A673 (cell line): ENCODE measurements at regions of chr7 and their contacts with region 1.

Region 1: DNA sequence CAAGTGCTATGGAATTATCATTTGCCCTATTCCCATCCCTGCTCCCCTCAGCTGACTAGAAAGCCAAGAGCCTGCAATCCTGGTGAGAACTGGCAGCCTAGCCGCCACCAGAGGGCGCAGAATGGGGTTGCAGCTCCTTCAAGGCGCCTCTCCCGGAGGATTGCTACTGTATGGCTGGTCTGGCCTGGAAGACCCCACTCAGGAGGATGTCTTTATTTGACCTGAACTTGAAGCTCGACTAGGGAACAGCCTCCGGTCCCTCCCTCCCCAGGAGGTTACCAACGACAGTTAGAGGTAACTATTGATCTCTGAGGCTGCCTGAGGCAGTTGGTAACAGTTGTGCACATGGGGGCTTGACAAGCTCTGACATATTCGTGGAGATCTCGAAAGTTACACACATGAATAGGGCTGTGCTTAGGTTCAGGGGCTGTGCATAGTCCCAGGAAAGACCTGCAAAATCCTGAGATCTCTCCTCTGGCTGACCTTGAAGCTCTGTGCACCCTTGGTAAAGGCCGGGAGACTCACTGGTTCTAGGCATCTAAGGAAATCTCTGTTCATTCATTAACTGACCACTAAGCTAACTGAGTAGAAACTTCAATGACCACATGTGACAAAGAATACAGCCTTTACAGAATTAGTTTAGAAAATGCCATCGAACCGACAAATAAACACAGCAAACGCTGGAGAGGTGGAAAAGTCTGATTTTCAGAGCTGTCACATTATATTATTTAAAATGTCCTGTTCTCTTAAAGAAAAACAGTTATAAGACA is 65.7 kb downstream of the TSPAN12 start:
- DNase-seq: peak; percentile 82
- H3K4me3 ChIP-seq: no peak overlapping the region
- H3K27ac ChIP-seq: no peak overlapping the region
- H3K4me1 ChIP-seq: no peaks in the 10 kb centered on the region
- H3K27me3 ChIP-seq: no peaks in the 10 kb centered on the region
- CTCF ChIP-seq: peak; percentile 97

Region 2: DNA sequence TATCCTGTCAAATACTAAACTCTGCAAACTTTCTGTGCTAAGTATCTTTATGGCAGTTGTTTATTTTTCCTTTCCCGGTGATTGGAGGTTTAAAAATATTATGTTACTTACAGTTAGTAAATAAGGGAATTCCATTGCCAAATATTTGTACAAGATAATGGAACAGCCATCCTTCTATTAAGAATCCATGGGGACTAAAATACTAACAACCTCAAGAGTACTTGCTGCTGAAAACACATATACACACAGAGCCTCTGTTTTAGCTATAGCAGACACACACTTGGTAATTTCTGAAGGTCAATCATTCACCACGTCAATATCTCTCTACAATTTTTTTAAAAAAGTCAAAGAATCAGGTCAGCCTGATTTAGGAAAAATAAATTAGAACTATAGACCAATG is 33.3 kb after region 1 on chr7:
- CTCF ChIA-PET with region 1: no interaction called
- POLR2A ChIA-PET with region 1: no interaction called
- intact Hi-C with region 1: no loop called
- DNase-seq: no peak
- H3K4me3 ChIP-seq: no peak overlapping the region
- H3K27ac ChIP-seq: no peak overlapping the region
- H3K4me1 ChIP-seq: no peaks in the 10 kb centered on the region
- H3K27me3 ChIP-seq: no peaks in the 10 kb centered on the region
- CTCF ChIP-seq: no peak

Region 3: GRCh38 chr7:120941064-120941463 is 148.8 kb after region 1 on chr7:
- CTCF ChIA-PET with region 1: interaction called, 3 read pairs
- POLR2A ChIA-PET with region 1: no interaction called
- intact Hi-C with region 1: loop called (anchors 5 kb)
- DNase-seq: peak; percentile 29
- H3K4me3 ChIP-seq: no peak overlapping the region
- H3K27ac ChIP-seq: no peak overlapping the region
- H3K4me1 ChIP-seq: no peaks in the 10 kb centered on the region
- H3K27me3 ChIP-seq: no peaks in the 10 kb centered on the region
- CTCF ChIP-seq: peak; percentile 58

Region 4: GRCh38 chr7:121081327-121081936 is 289.2 kb after region 1 on chr7:
- CTCF ChIA-PET with region 1: interaction called, 4 read pairs
- POLR2A ChIA-PET with region 1: no interaction called
- intact Hi-C with region 1: loop called (anchors 5 kb)
- DNase-seq: peak; percentile 77
- H3K4me3 ChIP-seq: no peak overlapping the region
- H3K27ac ChIP-seq: no peak overlapping the region
- H3K4me1 ChIP-seq: no peaks in the 10 kb centered on the region
- H3K27me3 ChIP-seq: no peaks in the 10 kb centered on the region
- CTCF ChIP-seq: peak; percentile 71

Region 5: DNA sequence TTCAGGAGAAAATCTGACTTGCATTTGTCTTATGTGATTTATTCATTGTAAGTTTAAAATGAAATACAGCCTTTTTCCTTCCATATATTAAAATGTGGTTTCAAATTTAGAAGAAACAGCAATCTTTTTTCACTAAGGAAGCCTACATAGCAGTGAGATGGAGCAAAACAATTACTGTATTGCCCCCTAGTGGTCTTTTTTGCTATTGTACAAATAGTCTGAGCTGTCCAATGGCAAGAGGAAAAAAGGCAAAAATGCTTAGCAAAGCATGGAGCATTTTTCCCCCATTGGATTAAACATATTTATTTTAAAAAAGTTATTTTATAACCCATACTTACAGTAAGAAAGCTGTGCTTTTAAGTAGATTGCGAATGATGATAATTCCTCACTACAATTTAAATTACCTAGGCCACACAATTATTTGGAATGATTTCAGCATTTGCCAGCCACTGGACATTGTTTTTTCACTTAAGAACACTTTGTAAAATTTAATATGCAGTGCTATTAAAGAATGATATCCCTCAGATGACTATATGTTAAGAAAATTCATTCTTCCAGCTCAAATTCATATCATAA is 315.7 kb after region 1 on chr7:
- CTCF ChIA-PET with region 1: no interaction called
- POLR2A ChIA-PET with region 1: no interaction called
- intact Hi-C with region 1: loop called (anchors 5 kb)
- DNase-seq: peak; percentile 70
- H3K4me3 ChIP-seq: no peak overlapping the region
- H3K27ac ChIP-seq: no peak overlapping the region
- H3K4me1 ChIP-seq: no peaks in the 10 kb centered on the region
- H3K27me3 ChIP-seq: no peaks in the 10 kb centered on the region
- CTCF ChIP-seq: peak; percentile 78

Region 6: GRCh38 chr7:121329191-121330052 is 537.1 kb after region 1 on chr7:
- CTCF ChIA-PET with region 1: no interaction called
- POLR2A ChIA-PET with region 1: no interaction called
- intact Hi-C with region 1: loop called (anchors 10 kb)
- DNase-seq: no peak
- H3K4me3 ChIP-seq: peak overlapping the region; percentile 27
- H3K27ac ChIP-seq: no peak overlapping the region
- H3K4me1 ChIP-seq: peaks cover 15% of the 10 kb centered on the region
- H3K27me3 ChIP-seq: peaks cover 78% of the 10 kb centered on the region
- CTCF ChIP-seq: no peak